ENCODE measurements at regions of chr10 and their contacts with region 1.

Region 1: DNA sequence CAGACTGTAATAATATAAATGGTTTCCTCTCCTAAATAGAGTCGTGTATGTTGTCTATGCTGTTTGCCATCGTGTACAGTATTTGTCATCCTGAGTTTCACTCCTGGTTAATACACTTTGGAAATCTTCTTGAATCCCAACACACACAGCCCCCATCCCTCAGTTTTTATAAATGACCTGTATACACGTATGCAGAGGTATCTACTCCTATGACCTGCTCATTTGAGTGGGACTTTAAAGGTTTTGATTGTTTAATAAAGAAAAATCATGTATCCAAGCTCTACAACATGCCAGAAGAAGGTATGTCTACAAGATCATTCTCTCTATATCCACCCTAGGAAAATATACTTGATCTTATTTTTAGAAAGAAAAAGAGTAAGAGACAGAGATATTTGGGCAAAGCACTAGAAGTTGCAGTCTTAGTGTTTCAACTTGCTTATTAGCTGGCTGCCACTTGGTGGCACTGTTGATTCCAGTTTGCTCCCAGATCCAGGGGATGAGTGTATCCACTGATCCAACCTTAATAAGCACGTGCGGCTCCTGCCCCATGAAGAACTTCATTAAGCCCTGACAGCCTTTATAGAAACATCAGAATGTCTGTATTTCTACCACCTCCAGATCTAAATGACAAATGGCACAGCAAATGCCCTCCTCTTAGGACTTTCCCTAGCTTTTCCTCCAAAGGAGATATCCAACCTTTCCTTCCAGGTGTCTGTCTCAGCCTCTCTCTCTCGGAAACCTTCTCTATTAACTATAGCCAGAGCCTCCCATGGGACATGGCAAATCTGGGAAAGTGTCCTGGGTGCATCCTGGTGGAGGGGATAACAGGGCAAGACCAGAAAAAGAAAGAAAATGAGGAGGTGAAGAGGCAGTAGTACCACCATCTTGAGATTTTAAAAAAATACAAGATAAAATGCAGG is 181.6 kb upstream of the NEBL start:
- DNase-seq: peak; percentile 38
- H3K4me3 ChIP-seq: peak overlapping the region; percentile 26
- H3K27ac ChIP-seq: peak overlapping the region; percentile 72
- H3K4me1 ChIP-seq: peaks cover 11% of the 10 kb centered on the region
- H3K27me3 ChIP-seq: no peaks in the 10 kb centered on the region
- CTCF ChIP-seq: peak; percentile 85

Region 2: GRCh38 chr10:21265621-21266020 is 187.0 kb after region 1 on chr10:
- intact Hi-C with region 1: loop called (anchors 5 kb)
- DNase-seq: no peak
- H3K4me3 ChIP-seq: no peak overlapping the region
- H3K27ac ChIP-seq: no peak overlapping the region
- H3K4me1 ChIP-seq: no peaks in the 10 kb centered on the region
- H3K27me3 ChIP-seq: no peaks in the 10 kb centered on the region
- CTCF ChIP-seq: no peak

Measured in left ventricle myocardium inferior (tissue), 1 donor.